PC-9 (cell line): ENCODE measurements at regions of chr17 and their contacts with region 1.

Region 1: GRCh38 chr17:996554-997344 is at the start of gene TIMM22:
- DNase-seq: peak; percentile 94 to 97
- H3K4me3 ChIP-seq: peak within 1 kb of the TSS; percentile 86
- H3K27ac ChIP-seq: peak within 1 kb of the TSS; percentile 63
- H3K4me1 ChIP-seq: peaks cover 14% of the 10 kb centered on the region
- H3K27me3 ChIP-seq: no peaks in the 10 kb centered on the region
- CTCF ChIP-seq: peak; percentile 96
- total RNA-seq, gene TIMM22: 11.5 and 11.6 TPM in 2 replicates

Region 2: GRCh38 chr17:385926-386876 is 610.5 kb before region 1 on chr17:
- CTCF ChIA-PET with region 1: interaction called, 3 read pairs
- POLR2A ChIA-PET with region 1: no interaction called
- intact Hi-C with region 1: loop called (anchors 10 kb)
- DNase-seq: peak; percentile 47 to 90
- H3K4me3 ChIP-seq: peak overlapping the region; percentile 51; the same call in 1 of the 2 replicates
- H3K27ac ChIP-seq: no peak overlapping the region
- H3K4me1 ChIP-seq: 0 out of 2 replicates have a peak, but pooled peaks cover 3% of the 10 kb centered on the region
- H3K27me3 ChIP-seq: 0 out of 2 replicates have a peak, but pooled peaks cover 4% of the 10 kb centered on the region
- CTCF ChIP-seq: peak; percentile 59; the same call in 1 of the 2 replicates

Region 3: DNA sequence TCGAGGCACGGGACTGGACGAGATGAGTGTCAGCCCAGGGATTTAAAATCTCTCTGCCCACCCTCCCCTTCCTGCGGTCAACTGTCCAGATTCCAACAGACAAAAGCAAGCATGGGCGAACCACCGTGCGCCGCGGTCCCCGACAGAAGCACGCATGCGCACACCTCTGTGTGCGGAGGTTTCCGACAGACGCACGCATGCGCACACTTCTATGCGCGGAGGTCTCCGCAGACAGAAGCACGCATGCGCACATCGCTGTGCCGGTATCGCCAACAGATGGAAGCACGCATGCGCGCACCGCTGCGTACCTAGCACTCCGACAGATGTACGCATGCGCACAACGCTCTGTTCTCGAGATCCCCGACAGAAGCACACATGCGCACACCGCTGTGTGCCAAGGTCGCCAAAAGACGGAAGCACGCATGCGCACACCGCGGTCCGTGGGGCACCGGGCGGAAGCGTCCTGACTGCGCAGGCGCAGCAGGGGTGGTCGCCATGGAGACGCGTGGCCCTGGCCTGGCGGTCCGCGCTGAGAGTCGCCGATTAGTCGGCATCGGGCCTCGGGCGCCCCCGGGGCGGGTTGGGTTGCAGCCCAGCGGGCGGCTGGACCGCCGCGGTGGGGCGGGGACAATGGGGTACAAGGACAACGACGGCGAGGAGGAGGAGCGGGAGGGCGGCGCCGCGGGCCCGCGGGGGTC is 586.8 kb before region 1 on chr17:
- CTCF ChIA-PET with region 1: interaction called, 11 read pairs
- POLR2A ChIA-PET with region 1: no interaction called
- intact Hi-C with region 1: loop called (anchors 1 kb)
- DNase-seq: peak; percentile 96 to 100
- H3K4me3 ChIP-seq: peak overlapping the region; percentile 97
- H3K27ac ChIP-seq: no peak overlapping the region
- H3K4me1 ChIP-seq: peaks cover 11% of the 10 kb centered on the region
- H3K27me3 ChIP-seq: no peaks in the 10 kb centered on the region
- CTCF ChIP-seq: no peak

Region 4: GRCh38 chr17:716238-716637 is 280.5 kb before region 1 on chr17:
- CTCF ChIA-PET with region 1: interaction called, 5 read pairs
- POLR2A ChIA-PET with region 1: no interaction called
- intact Hi-C with region 1: loop called (anchors 1 kb)
- DNase-seq: no peak
- H3K4me3 ChIP-seq: no peak overlapping the region; the same call in 1 of the 2 replicates
- H3K27ac ChIP-seq: no peak overlapping the region
- H3K4me1 ChIP-seq: peaks cover 26% of the 10 kb centered on the region
- H3K27me3 ChIP-seq: no peaks in the 10 kb centered on the region
- CTCF ChIP-seq: no peak

Region 5: GRCh38 chr17:781805-782731 is 214.7 kb before region 1 on chr17 and contains the starts of genes GLOD4 and MRM3:
- CTCF ChIA-PET with region 1: interaction called, 4 read pairs
- POLR2A ChIA-PET with region 1: interaction called, 3 read pairs
- intact Hi-C with region 1: loop called (anchors 5 kb)
- DNase-seq: peak; percentile 67 to 90
- H3K4me3 ChIP-seq: peak within 1 kb of the TSS; percentile 92
- H3K27ac ChIP-seq: peak within 1 kb of the TSS; percentile 47
- H3K4me1 ChIP-seq: peaks cover 17% of the 10 kb centered on the region
- H3K27me3 ChIP-seq: no peaks in the 10 kb centered on the region
- CTCF ChIP-seq: 0 out of 2 replicates have a peak, but pooled peaks have one; percentile 16
- total RNA-seq, gene GLOD4: 110 and 123 TPM in 2 replicates
- total RNA-seq, gene MRM3: 23.2 and 25.0 TPM in 2 replicates

Region 6: GRCh38 chr17:794876-795275 is 201.9 kb before region 1 on chr17:
- CTCF ChIA-PET with region 1: interaction called, 5 read pairs
- POLR2A ChIA-PET with region 1: interaction called, 10 read pairs
- intact Hi-C with region 1: no loop called
- DNase-seq: peak; percentile 42 to 54
- H3K4me3 ChIP-seq: no peak overlapping the region
- H3K27ac ChIP-seq: no peak overlapping the region
- H3K4me1 ChIP-seq: no peaks in the 10 kb centered on the region
- H3K27me3 ChIP-seq: no peaks in the 10 kb centered on the region
- CTCF ChIP-seq: peak; percentile 82

Region 7: DNA sequence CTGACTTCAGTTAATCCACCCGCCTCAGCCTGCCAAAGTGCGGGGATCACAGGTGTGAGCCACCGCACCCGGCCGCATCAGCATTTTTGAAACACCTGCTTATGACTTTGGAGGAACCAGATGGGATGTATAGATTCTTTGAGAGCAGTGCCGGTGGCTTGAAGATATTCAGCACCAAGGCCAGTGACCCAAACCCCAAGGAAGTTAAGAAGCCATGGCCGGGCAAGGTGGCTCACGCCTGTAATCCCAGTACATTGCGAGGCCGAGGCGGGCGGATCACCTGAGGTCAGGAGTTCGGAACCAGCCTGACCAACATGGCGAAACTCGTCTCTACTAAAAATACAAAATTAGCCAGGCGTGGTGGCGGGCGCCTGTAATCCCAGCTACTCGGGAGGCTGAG is 326.6 kb after region 1 on chr17:
- CTCF ChIA-PET with region 1: no interaction called
- POLR2A ChIA-PET with region 1: no interaction called
- intact Hi-C with region 1: no loop called
- DNase-seq: no peak
- H3K4me3 ChIP-seq: no peak overlapping the region
- H3K27ac ChIP-seq: no peak overlapping the region
- H3K4me1 ChIP-seq: no peaks in the 10 kb centered on the region
- H3K27me3 ChIP-seq: peaks cover 57% of the 10 kb centered on the region
- CTCF ChIP-seq: no peak